ENCODE measurements at regions of chr19 and their contacts with region 1.

Region 1: DNA sequence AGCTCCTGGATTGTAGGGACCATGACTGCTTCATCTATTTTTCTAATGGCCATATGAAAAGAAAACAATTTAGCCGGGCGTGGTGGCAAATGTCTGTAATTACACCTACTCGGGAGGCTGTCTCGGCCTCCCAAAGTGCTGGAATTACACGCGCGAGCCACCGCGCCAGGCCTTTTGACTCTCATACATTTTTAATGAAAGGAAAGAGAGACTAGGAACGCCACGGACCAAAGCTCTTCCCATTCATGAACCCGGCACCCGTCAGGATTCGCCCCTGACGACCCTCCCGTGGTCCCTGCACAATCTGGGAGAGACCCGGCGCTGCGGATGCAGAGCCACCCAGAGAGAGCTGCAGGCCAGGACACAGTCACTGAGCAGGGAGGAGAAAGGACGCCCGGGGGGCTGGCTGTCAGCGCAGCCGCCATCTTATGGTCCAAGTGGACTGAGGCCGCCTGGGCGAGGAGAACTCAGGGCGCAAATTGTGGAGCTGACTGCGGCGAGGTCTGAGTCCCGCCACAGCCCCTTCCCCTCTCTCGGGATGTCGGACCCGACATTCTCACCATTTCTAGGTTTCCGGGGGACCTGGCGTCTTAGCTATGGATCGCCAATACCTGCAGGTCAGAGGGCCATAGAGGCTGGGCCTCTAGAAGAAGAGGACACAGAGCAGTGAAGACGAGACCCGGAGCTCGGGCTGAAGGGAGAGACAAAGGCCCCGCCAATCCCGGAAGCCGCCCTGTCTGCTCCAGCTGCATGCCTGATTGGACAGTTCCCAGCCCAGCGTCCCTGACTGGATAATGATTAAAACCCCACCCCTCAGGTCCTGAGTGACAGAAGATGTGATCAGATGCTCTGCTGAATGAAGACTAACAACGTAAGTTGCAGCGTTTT is at the start of gene ZNF681:
- DNase-seq: peak; percentile 56 to 93 (median 89)
- ATAC-seq: peak; percentile 93
- H3K4me3 ChIP-seq: peak within 1 kb of the TSS; percentile 95
- H3K4me3 Mint-ChIP-seq: peak within 1 kb of the TSS; percentile 87 to 96 (median 92)
- H3K27ac ChIP-seq: peak within 1 kb of the TSS; percentile 91
- H3K27ac Mint-ChIP-seq: peak within 1 kb of the TSS; percentile 89 to 97 (median 94)
- H3K4me1 ChIP-seq: peaks cover 0 to under 1% of the 10 kb centered on the region in 2 donors
- H3K4me1 Mint-ChIP-seq: peaks cover 12 to 48% (median 29%) of the 10 kb centered on the region in 7 donors
- H3K27me3 ChIP-seq: no peaks in the 10 kb centered on the region
- H3K27me3 Mint-ChIP-seq: no peaks in the 10 kb centered on the region
- total RNA-seq, gene ZNF681: 1.8 to 12.9 (median 4.4) TPM

Region 2: GRCh38 chr19:23249911-23250649 is 508.4 kb before region 1 on chr19 and contains the start of gene ZNF724:
- CTCF ChIA-PET with region 1: no interaction called
- POLR2A ChIA-PET with region 1: interaction called, 5 read pairs
- intact Hi-C with region 1: loop called in 1 of 2 experiments (anchors 2 kb)
- DNase-seq: peak; percentile 66 to 91 (median 88)
- ATAC-seq: peak; percentile 100
- H3K4me3 ChIP-seq: peak within 1 kb of the TSS; percentile 84
- H3K4me3 Mint-ChIP-seq: peak within 1 kb of the TSS; percentile 95 to 99 (median 96)
- H3K27ac ChIP-seq: peak within 1 kb of the TSS; percentile 72
- H3K27ac Mint-ChIP-seq: peak within 1 kb of the TSS; percentile 61 to 96 (median 89)
- H3K4me1 ChIP-seq: peaks cover 0 to 6% of the 10 kb centered on the region in 2 donors
- H3K4me1 Mint-ChIP-seq: peaks cover 6 to 22% (median 10%) of the 10 kb centered on the region in 7 donors
- H3K27me3 ChIP-seq: no peaks in the 10 kb centered on the region
- H3K27me3 Mint-ChIP-seq: no peaks in the 10 kb centered on the region
- total RNA-seq, gene ZNF724: 2.9 to 11.3 (median 6.8) TPM

Region 3: GRCh38 chr19:23395041-23395721 is 363.2 kb before region 1 on chr19 and contains the start of gene ZNF91:
- CTCF ChIA-PET with region 1: interaction called, 4 read pairs
- POLR2A ChIA-PET with region 1: interaction called, 7 read pairs
- intact Hi-C with region 1: loop called (anchors 1 kb)
- DNase-seq: peak; percentile 73 to 96 (median 92)
- ATAC-seq: peak; percentile 98
- H3K4me3 ChIP-seq: peak within 1 kb of the TSS; percentile 96
- H3K4me3 Mint-ChIP-seq: peak within 1 kb of the TSS; percentile 96 to 99 (median 98)
- H3K27ac ChIP-seq: peak within 1 kb of the TSS; percentile 96
- H3K27ac Mint-ChIP-seq: peak within 1 kb of the TSS; percentile 94 to 99 (median 98)
- H3K4me1 ChIP-seq: peaks cover 12% of the 10 kb centered on the region in 2 donors
- H3K4me1 Mint-ChIP-seq: peaks cover 4 to 43% (median 37%) of the 10 kb centered on the region in 7 donors
- H3K27me3 ChIP-seq: no peaks in the 10 kb centered on the region
- H3K27me3 Mint-ChIP-seq: no peaks in the 10 kb centered on the region
- total RNA-seq, gene ZNF91: 40.5 to 165 (median 90.6) TPM

Region 4: GRCh38 chr19:23673132-23673531 is 85.3 kb before region 1 on chr19:
- CTCF ChIA-PET with region 1: no interaction called
- POLR2A ChIA-PET with region 1: no interaction called
- intact Hi-C with region 1: no loop called
- DNase-seq: no peak
- ATAC-seq: no peak
- H3K4me3 ChIP-seq: no peak overlapping the region
- H3K4me3 Mint-ChIP-seq: peak overlapping the region in 2 of 10 donors; percentile 4 to 25
- H3K27ac ChIP-seq: no peak overlapping the region
- H3K27ac Mint-ChIP-seq: no peak overlapping the region
- H3K4me1 ChIP-seq: peaks cover 0 to 8% of the 10 kb centered on the region in 2 donors
- H3K4me1 Mint-ChIP-seq: peaks cover 0 to 42% (median 30%) of the 10 kb centered on the region in 7 donors
- H3K27me3 ChIP-seq: no peaks in the 10 kb centered on the region
- H3K27me3 Mint-ChIP-seq: no peaks in the 10 kb centered on the region

Region 5: GRCh38 chr19:23817519-23817918 is 59.1 kb after region 1 on chr19:
- CTCF ChIA-PET with region 1: interaction called, 4 read pairs
- POLR2A ChIA-PET with region 1: interaction called, 3 read pairs
- intact Hi-C with region 1: loop called in 1 of 2 experiments (anchors 1 kb)
- DNase-seq: peak in 6 of 9 donors; percentile 13 to 39 (median 26)
- ATAC-seq: peak; percentile 63
- H3K4me3 ChIP-seq: no peak overlapping the region
- H3K4me3 Mint-ChIP-seq: no peak overlapping the region
- H3K27ac ChIP-seq: no peak overlapping the region
- H3K27ac Mint-ChIP-seq: peak overlapping the region in 1 of 9 donors; percentile 4
- H3K4me1 ChIP-seq: no peaks in the 10 kb centered on the region
- H3K4me1 Mint-ChIP-seq: peaks cover 0 to 3% (median 0%) of the 10 kb centered on the region in 7 donors
- H3K27me3 ChIP-seq: no peaks in the 10 kb centered on the region
- H3K27me3 Mint-ChIP-seq: no peaks in the 10 kb centered on the region

Measured in naive thymus-derived CD4-positive, alpha-beta T cell (primary cell).